ENCODE measurements at regions of chr7 and their contacts with region 1.

Region 1: DNA sequence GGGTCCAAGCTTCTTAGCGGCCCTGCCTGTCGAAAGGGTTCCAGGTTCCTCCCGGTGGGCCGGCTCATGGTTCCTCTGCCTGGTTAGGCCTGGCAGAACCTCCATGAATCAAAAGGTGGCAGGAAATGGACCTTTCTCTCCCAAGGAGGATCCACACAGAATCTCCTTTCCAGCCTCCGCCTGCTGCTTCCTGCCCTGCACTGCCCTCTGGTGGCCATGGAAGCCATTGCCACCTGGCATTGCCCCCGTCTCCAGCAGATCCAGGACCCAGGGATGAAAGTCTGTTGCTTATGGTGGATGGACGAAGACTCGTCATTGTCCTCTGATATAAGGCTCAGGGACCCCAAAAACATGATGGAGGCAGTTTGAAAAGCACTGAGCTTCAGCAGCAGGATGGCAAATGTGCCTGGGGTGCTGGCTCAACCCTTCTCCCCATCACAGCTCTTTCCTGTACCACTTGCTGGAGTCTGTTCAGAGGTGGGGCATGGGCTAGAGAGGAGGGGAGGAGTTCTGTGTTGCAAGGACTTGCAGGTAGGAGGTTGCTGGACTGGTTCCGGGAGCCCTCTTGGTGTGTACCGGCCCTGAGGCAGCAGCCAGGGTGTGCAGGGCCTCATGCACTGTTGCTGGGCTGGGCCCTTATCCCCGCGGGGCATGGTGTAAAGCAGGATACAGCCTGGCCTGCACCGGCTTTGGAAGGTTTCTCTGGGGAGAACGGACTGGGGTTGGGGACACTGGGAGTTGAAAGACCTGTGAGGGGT is 11.3 kb upstream of the INMT start:
- DNase-seq: peak; percentile 84
- ATAC-seq: peak; percentile 71
- H3K4me3 Mint-ChIP-seq: no peak overlapping the region
- H3K27ac Mint-ChIP-seq: no peak overlapping the region
- H3K4me1 Mint-ChIP-seq: peaks cover 34% of the 10 kb centered on the region
- H3K27me3 Mint-ChIP-seq: no peaks in the 10 kb centered on the region
- CTCF ChIP-seq: peak; percentile 98

Region 2: DNA sequence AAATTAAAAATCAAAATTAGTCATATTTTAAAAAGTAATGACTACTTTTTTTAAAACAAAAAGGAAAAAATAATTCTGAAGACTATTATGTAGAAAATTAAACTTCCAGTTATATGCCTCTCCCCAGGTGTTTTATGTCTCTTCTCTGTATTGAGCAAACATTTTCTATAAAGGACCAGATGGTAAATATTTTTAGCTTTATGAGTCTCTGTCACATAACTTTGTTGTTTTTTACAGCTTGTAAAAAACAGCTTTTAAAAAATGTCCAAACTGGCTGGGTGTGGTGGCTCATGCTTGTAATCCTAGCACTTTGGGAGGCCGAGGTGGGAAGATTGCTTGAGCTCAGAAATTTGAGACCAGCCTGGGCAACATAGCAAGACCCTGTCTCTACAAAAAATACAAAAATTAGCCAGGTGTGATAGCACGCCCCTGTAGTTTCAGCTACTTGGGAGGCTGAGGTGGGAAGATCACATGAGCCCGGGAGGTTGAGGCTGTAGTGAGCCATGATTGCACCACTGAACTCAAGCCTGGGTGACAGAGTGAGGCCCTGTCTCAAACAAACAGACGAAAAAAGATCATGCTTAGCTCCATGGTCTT is 122.4 kb before region 1 on chr7:
- CTCF ChIA-PET with region 1: interaction called, 13 read pairs
- POLR2A ChIA-PET with region 1: no interaction called
- intact Hi-C with region 1: no loop called
- DNase-seq: no peak
- ATAC-seq: no peak
- H3K4me3 Mint-ChIP-seq: no peak overlapping the region
- H3K27ac Mint-ChIP-seq: peak overlapping the region; percentile 20
- H3K4me1 Mint-ChIP-seq: peaks cover 14% of the 10 kb centered on the region
- H3K27me3 Mint-ChIP-seq: no peaks in the 10 kb centered on the region
- CTCF ChIP-seq: no peak

Region 3: DNA sequence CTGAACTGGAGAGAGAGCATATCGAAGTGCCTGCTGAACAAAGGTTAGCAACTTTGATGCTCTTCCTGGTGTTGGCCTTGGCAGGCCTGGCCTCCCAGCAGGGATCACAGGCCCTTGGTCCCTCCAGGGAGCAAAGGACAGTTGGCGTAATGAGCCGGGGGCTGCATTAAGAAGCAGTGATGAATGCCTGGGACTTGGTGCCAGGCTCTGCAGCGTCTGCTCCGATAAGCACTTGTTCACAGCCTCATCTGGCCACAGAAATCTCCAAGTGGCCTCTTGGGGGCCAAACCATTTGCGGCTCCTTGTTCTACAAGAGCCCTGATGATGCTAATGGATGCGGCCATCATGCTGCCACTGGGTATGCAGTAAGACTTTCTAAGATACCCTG is 90.2 kb before region 1 on chr7:
- CTCF ChIA-PET with region 1: interaction called, 10 read pairs
- POLR2A ChIA-PET with region 1: no interaction called
- intact Hi-C with region 1: no loop called
- DNase-seq: no peak
- ATAC-seq: no peak
- H3K4me3 Mint-ChIP-seq: no peak overlapping the region
- H3K27ac Mint-ChIP-seq: no peak overlapping the region
- H3K4me1 Mint-ChIP-seq: no peaks in the 10 kb centered on the region
- H3K27me3 Mint-ChIP-seq: no peaks in the 10 kb centered on the region
- CTCF ChIP-seq: no peak

Region 4: GRCh38 chr7:30694218-30694745 is 46.3 kb before region 1 on chr7:
- CTCF ChIA-PET with region 1: interaction called, 42 read pairs
- POLR2A ChIA-PET with region 1: no interaction called
- intact Hi-C with region 1: no loop called
- DNase-seq: no peak
- ATAC-seq: no peak
- H3K4me3 Mint-ChIP-seq: no peak overlapping the region
- H3K27ac Mint-ChIP-seq: no peak overlapping the region
- H3K4me1 Mint-ChIP-seq: peaks cover 3% of the 10 kb centered on the region
- H3K27me3 Mint-ChIP-seq: peaks cover 2% of the 10 kb centered on the region
- CTCF ChIP-seq: no peak

Region 5: GRCh38 chr7:30710669-30711068 is 29.9 kb before region 1 on chr7:
- CTCF ChIA-PET with region 1: interaction called, 11 read pairs
- POLR2A ChIA-PET with region 1: no interaction called
- intact Hi-C with region 1: no loop called
- DNase-seq: no peak
- ATAC-seq: no peak
- H3K4me3 Mint-ChIP-seq: no peak overlapping the region
- H3K27ac Mint-ChIP-seq: no peak overlapping the region
- H3K4me1 Mint-ChIP-seq: no peaks in the 10 kb centered on the region
- H3K27me3 Mint-ChIP-seq: no peaks in the 10 kb centered on the region
- CTCF ChIP-seq: no peak

Region 6: GRCh38 chr7:30750683-30751650 is 10.4 kb after region 1 on chr7:
- CTCF ChIA-PET with region 1: interaction called, 24 read pairs
- POLR2A ChIA-PET with region 1: no interaction called
- intact Hi-C with region 1: no loop called
- DNase-seq: no peak
- ATAC-seq: no peak
- H3K4me3 Mint-ChIP-seq: no peak overlapping the region
- H3K27ac Mint-ChIP-seq: no peak overlapping the region
- H3K4me1 Mint-ChIP-seq: no peaks in the 10 kb centered on the region
- H3K27me3 Mint-ChIP-seq: no peaks in the 10 kb centered on the region
- CTCF ChIP-seq: no peak

Region 7: GRCh38 chr7:30779574-30779973 is 39.0 kb after region 1 on chr7:
- CTCF ChIA-PET with region 1: no interaction called
- POLR2A ChIA-PET with region 1: no interaction called
- intact Hi-C with region 1: no loop called
- DNase-seq: no peak
- ATAC-seq: no peak
- H3K4me3 Mint-ChIP-seq: no peak overlapping the region
- H3K27ac Mint-ChIP-seq: no peak overlapping the region
- H3K4me1 Mint-ChIP-seq: no peaks in the 10 kb centered on the region
- H3K27me3 Mint-ChIP-seq: no peaks in the 10 kb centered on the region
- CTCF ChIP-seq: no peak